ENCODE measurements at regions of chr2 and their contacts with region 1.

Region 1: GRCh38 chr2:156505696-156506095 is 69.5 kb downstream of the GPD2 start:
- DNase-seq: no peak
- ATAC-seq: peak; percentile 85
- H3K4me3 ChIP-seq: no peak overlapping the region
- H3K27ac ChIP-seq: no peak overlapping the region
- H3K4me1 ChIP-seq: peaks cover 12% of the 10 kb centered on the region
- H3K27me3 ChIP-seq: no peaks in the 10 kb centered on the region
- CTCF ChIP-seq: no peak
- EP300 ChIP-seq: no peak
- POLR2A ChIP-seq: no peak
- RAD21 ChIP-seq: no peak

Region 2: DNA sequence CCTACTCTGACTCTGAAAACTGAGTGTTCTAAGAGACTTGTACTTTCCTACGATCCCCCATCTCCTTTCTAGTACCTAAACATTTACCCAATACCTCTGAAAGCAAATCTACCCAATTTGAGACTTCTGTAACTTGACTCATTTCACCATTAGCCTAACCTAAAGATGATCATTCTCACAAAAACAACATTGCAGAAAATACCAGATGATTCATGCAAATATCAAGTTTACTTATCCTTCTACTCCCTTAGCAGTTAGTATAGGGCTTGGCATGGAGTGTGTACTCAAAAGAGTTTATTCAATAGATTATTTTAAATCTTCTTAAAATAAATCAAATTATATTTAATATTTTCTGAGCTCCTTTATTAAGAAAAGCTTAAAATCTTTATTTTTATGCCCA is 262.8 kb before region 1 on chr2:
- CTCF ChIA-PET with region 1: no interaction called
- POLR2A ChIA-PET with region 1: no interaction called
- RAD21 ChIA-PET with region 1: no interaction called
- SMC1A ChIA-PET with region 1: no interaction called
- in situ Hi-C with region 1: no loop called
- intact Hi-C with region 1: no loop called
- DNase-seq: no peak
- ATAC-seq: no peak
- H3K4me3 ChIP-seq: no peak overlapping the region
- H3K27ac ChIP-seq: no peak overlapping the region
- H3K4me1 ChIP-seq: no peaks in the 10 kb centered on the region
- H3K27me3 ChIP-seq: no peaks in the 10 kb centered on the region
- CTCF ChIP-seq: no peak
- EP300 ChIP-seq: no peak
- POLR2A ChIP-seq: no peak
- RAD21 ChIP-seq: no peak

Region 3: DNA sequence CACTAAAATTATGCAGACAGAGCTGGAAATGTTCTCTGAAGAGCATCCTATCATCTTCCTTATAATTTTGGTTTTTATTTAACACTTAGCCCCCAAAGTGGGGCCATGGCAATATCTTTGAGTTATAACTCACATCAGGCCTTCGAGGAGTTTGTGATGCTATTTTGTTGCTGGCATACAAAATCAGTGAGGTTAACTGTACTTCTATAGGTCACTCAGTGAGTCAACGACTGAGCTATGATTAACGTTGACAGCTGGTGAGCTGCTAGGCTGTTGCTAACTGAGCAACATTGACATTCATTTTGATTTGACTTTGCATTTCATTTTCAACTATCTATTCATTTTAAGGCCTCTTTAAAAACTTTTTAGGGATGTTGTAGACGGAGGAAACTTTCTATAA is 19.5 kb before region 1 on chr2:
- CTCF ChIA-PET with region 1: interaction called, 3 read pairs
- POLR2A ChIA-PET with region 1: interaction called, 6 read pairs
- RAD21 ChIA-PET with region 1: no interaction called
- SMC1A ChIA-PET with region 1: interaction called, 13 read pairs
- in situ Hi-C with region 1: no loop called
- intact Hi-C with region 1: no loop called
- DNase-seq: no peak
- ATAC-seq: no peak
- H3K4me3 ChIP-seq: no peak overlapping the region
- H3K27ac ChIP-seq: no peak overlapping the region
- H3K4me1 ChIP-seq: peaks cover 13% of the 10 kb centered on the region
- H3K27me3 ChIP-seq: no peaks in the 10 kb centered on the region
- CTCF ChIP-seq: no peak
- EP300 ChIP-seq: no peak
- POLR2A ChIP-seq: no peak
- RAD21 ChIP-seq: no peak

Region 4: GRCh38 chr2:156517419-156517818 is 11.7 kb after region 1 on chr2:
- CTCF ChIA-PET with region 1: interaction called, 5 read pairs
- POLR2A ChIA-PET with region 1: interaction called, 4 read pairs
- RAD21 ChIA-PET with region 1: interaction called, 13 read pairs
- SMC1A ChIA-PET with region 1: interaction called, 19 read pairs
- in situ Hi-C with region 1: no loop called
- intact Hi-C with region 1: no loop called
- DNase-seq: no peak
- ATAC-seq: peak; percentile 64
- H3K4me3 ChIP-seq: no peak overlapping the region
- H3K27ac ChIP-seq: peak overlapping the region; percentile 28; the same call in 1 of the 2 replicates
- H3K4me1 ChIP-seq: peaks cover 4% of the 10 kb centered on the region; the same call in 1 of the 2 replicates
- H3K27me3 ChIP-seq: no peaks in the 10 kb centered on the region
- CTCF ChIP-seq: no peak
- EP300 ChIP-seq: no peak
- POLR2A ChIP-seq: no peak
- RAD21 ChIP-seq: no peak

Region 5: GRCh38 chr2:157404363-157404762 is 898.7 kb after region 1 on chr2:
- CTCF ChIA-PET with region 1: no interaction called
- POLR2A ChIA-PET with region 1: no interaction called
- RAD21 ChIA-PET with region 1: no interaction called
- SMC1A ChIA-PET with region 1: no interaction called
- in situ Hi-C with region 1: loop called (anchors 25 kb)
- intact Hi-C with region 1: no loop called
- DNase-seq: peak; percentile 85
- ATAC-seq: peak; percentile 99
- H3K4me3 ChIP-seq: no peak overlapping the region
- H3K27ac ChIP-seq: no peak overlapping the region; the same call in 1 of the 2 replicates
- H3K4me1 ChIP-seq: peaks cover 7% of the 10 kb centered on the region
- H3K27me3 ChIP-seq: no peaks in the 10 kb centered on the region
- CTCF ChIP-seq: no peak
- EP300 ChIP-seq: peak; percentile 87 to 92
- POLR2A ChIP-seq: no peak
- RAD21 ChIP-seq: 0 out of 2 replicates have a peak, but pooled peaks have one; percentile 17